Breast epithelium (tissue), 4 donors: ENCODE measurements at regions of chr1 and their contacts with region 1.

Region 1: DNA sequence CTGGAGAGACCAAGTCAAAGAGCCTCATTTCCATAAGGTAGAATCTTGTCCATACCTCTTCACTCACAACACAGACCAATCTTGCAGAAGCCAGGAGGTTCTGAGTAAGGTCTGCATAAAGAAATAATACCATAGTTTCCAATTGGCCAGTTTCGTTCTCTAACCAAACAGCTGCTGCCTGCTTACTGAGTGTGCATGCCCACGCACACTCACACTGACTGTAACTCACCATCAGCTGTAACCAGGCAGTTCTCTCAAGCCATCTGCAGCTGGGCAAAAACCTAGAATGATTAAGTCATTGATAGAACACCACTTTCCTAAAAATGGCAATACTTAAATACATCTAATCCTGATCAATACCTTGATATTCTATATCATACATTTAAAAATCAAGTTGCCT is 106.6 kb upstream of the VAV3 start:
- DNase-seq: no peak
- H3K4me3 ChIP-seq: no peak overlapping the region
- H3K27ac ChIP-seq: no peak overlapping the region
- H3K4me1 ChIP-seq: no peaks in the 10 kb centered on the region
- H3K27me3 ChIP-seq: no peaks in the 10 kb centered on the region
- CTCF ChIP-seq: no peak
- POLR2A ChIP-seq: no peak

Region 2: GRCh38 chr1:107220036-107220435 is 851.6 kb before region 1 on chr1:
- intact Hi-C with region 1: loop called (anchors 5 kb)
- DNase-seq: no peak
- H3K4me3 ChIP-seq: no peak overlapping the region
- H3K27ac ChIP-seq: no peak overlapping the region
- H3K4me1 ChIP-seq: no peaks in the 10 kb centered on the region
- H3K27me3 ChIP-seq: no peaks in the 10 kb centered on the region
- CTCF ChIP-seq: no peak
- POLR2A ChIP-seq: no peak

Region 3: GRCh38 chr1:108084954-108085353 is 13.4 kb after region 1 on chr1:
- intact Hi-C with region 1: loop called (anchors 1 kb)
- DNase-seq: no peak
- H3K4me3 ChIP-seq: no peak overlapping the region
- H3K27ac ChIP-seq: no peak overlapping the region
- H3K4me1 ChIP-seq: no peaks in the 10 kb centered on the region
- H3K27me3 ChIP-seq: no peaks in the 10 kb centered on the region
- CTCF ChIP-seq: no peak
- POLR2A ChIP-seq: no peak